AG04449 (cell line): ENCODE measurements at regions of chr12 and their contacts with region 1.

Region 1: GRCh38 chr12:12645485-12645884 is 33.8 kb downstream of the CREBL2 start:
- DNase-seq: no peak
- H3K4me3 ChIP-seq: no peak overlapping the region
- CTCF ChIP-seq: peak; percentile 11

Region 2: GRCh38 chr12:12630850-12631249 is 14.6 kb before region 1 on chr12:
- CTCF ChIA-PET with region 1: interaction called, 21 read pairs
- POLR2A ChIA-PET with region 1: no interaction called
- DNase-seq: no peak
- H3K4me3 ChIP-seq: no peak overlapping the region
- CTCF ChIP-seq: no peak

Region 3: GRCh38 chr12:12661086-12661485 is 15.6 kb after region 1 on chr12:
- CTCF ChIA-PET with region 1: interaction called, 26 read pairs
- POLR2A ChIA-PET with region 1: interaction called, 3 read pairs
- DNase-seq: peak; percentile 65
- H3K4me3 ChIP-seq: no peak overlapping the region
- CTCF ChIP-seq: no peak